ENCODE measurements at regions of chrX and their contacts with region 1.

Region 1: DNA sequence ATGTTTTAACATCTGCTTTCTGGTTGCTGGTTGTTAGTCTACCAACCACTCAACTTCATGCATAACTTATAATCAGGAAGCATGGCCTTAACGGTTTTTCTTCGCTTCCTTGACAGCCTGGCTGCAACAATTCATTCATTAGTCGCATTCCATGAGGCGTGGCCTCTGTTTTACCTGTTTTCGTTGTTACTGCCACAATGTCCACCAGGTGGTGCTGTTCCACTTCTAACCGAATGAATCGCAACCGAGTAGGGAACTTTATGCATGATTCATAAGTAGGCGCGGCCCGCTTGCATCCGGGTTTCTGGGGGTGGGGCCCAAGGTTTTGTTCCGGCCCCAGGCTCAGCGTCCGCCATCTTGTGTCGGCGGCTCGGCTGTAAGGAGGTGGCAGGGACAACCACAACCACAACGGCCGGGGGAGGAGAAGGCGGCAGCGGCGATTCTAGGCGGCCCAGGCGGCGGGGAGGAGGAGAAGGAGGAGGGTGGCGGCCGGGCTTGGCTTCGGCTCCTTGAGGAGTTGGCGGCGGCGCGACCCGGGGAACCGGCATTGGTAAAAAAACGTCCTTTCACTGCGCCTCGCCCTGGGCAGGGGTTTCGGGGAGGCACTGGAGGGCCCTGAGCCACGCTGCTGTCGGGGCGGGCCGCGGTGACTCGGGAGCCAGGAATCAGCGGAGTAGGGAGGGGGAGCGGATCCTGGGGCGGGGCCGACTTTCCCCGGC is at the start of gene UBA1:
- DNase-seq: peak; percentile 98
- ATAC-seq: peak; percentile 48
- H3K4me3 ChIP-seq: peak within 1 kb of the TSS; percentile 85
- H3K27ac ChIP-seq: peak within 1 kb of the TSS; percentile 90
- H3K4me1 ChIP-seq: peaks cover 40% of the 10 kb centered on the region
- H3K27me3 ChIP-seq: no peaks in the 10 kb centered on the region
- CTCF ChIP-seq: peak; percentile 80
- total RNA-seq, gene UBA1: 282 and 299 TPM in 2 replicates

Region 2: DNA sequence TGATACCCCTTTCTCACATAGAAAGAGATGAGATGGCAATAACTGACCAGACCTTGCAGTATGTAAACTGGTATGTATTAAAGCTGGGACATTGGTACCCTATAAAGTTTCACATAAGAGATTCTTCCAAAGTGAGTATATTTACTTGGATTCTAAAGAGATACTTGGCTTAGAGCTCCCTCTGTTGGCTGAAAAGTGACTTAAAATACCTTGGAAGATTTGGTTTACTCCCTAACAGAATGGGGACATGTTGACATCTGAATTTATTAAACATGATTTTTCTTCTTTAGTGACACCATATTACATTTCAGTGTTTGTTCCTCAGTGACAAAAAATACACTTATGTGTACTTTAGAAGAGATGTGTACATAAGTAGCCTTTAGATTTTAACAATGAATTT is 163.3 kb before region 1 on chrX:
- CTCF ChIA-PET with region 1: no interaction called
- POLR2A ChIA-PET with region 1: no interaction called
- intact Hi-C with region 1: no loop called
- DNase-seq: peak; percentile 89
- ATAC-seq: peak; percentile 64
- H3K4me3 ChIP-seq: no peak overlapping the region
- H3K27ac ChIP-seq: no peak overlapping the region
- H3K4me1 ChIP-seq: no peaks in the 10 kb centered on the region
- H3K27me3 ChIP-seq: no peaks in the 10 kb centered on the region
- CTCF ChIP-seq: peak; percentile 74

Region 3: DNA sequence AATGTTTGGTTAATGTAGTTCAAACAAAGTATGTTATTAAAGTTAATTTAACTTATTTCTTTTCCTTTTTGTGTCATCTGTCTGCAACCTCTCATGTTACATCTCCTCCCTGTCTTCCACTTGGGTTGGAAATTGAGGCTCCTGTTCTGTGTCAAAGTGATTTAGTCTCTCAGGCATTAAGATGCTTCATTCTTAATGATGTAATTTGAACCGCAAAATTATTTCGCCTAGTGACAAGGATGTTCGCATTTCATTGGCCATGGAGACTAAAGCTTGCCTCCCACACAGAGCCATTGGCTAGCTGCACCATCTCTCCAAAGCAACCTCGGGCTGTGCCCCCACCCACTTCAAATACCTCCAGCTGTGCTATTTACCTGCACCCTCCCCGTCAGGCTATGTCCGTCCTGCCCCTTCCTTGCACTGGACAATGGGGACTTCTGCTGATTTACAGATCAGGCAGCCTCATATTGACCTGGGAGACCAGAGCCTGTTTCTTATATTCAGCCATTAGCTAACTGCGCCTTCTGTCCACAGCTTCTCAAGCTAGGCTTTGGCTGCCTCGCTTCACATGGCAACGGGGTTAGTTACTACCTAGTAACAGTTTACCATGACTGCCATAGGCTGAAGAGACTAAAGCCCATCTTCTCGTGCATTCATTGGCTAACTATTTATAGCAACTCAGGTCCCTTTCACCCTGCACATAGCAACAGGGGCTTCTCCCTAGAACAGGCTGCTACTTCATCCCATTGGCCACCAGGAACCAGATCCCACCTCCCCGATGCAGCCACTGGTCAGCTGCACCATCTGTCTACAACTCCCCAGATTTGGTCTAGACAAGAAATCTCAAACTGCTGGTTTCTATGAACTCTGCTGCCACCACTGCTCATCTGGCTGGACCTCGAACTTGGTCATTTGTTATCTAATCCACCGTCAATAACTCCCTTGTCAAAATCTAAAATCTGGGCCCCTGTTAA is 168.2 kb after region 1 on chrX:
- CTCF ChIA-PET with region 1: no interaction called
- POLR2A ChIA-PET with region 1: no interaction called
- intact Hi-C with region 1: loop called (anchors 5 kb)
- DNase-seq: peak; percentile 67
- ATAC-seq: peak; percentile 93
- H3K4me3 ChIP-seq: peak overlapping the region; percentile 39; the same call in 1 of the 2 replicates
- H3K27ac ChIP-seq: 0 out of 2 replicates have a peak overlapping the region, but pooled peaks have one; percentile 12
- H3K4me1 ChIP-seq: no peaks in the 10 kb centered on the region
- H3K27me3 ChIP-seq: no peaks in the 10 kb centered on the region
- CTCF ChIP-seq: no peak; the same call in 1 of the 2 replicates

Region 4: GRCh38 chrX:47482512-47483309 is 289.1 kb after region 1 on chrX and contains the start of gene ZNF41:
- CTCF ChIA-PET with region 1: no interaction called
- POLR2A ChIA-PET with region 1: no interaction called
- intact Hi-C with region 1: loop called (anchors 5 kb)
- DNase-seq: peak; percentile 90
- ATAC-seq: peak; percentile 92
- H3K4me3 ChIP-seq: peak within 1 kb of the TSS; percentile 92
- H3K27ac ChIP-seq: peak within 1 kb of the TSS; percentile 86
- H3K4me1 ChIP-seq: peaks cover 25% of the 10 kb centered on the region
- H3K27me3 ChIP-seq: no peaks in the 10 kb centered on the region
- CTCF ChIP-seq: no peak
- total RNA-seq, gene ZNF41: 11.1 and 11.3 TPM in 2 replicates

Region 5: DNA sequence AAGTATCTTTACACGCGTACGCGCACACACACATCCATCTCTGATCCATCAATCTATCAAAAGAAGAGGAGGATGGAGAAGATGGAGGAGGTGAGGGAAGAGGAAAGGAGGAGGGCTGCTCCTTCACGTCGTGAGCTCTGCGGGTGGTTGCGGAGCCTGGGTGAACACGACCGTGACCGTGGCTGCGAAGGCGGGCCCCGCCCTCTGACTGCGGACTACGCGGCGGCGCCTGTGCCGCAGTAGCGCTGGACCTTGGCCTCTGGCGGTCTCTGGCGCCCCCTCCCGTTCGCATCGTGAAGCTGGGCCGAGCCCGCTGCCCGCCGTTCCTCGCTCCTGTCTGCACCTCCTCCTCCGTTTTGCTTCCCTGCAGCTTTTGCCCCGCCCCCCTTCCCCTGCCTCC is 329.7 kb after region 1 on chrX:
- CTCF ChIA-PET with region 1: no interaction called
- POLR2A ChIA-PET with region 1: no interaction called
- intact Hi-C with region 1: loop called (anchors 1 kb)
- DNase-seq: peak; percentile 81
- ATAC-seq: peak; percentile 97
- H3K4me3 ChIP-seq: peak overlapping the region; percentile 72
- H3K27ac ChIP-seq: no peak overlapping the region
- H3K4me1 ChIP-seq: peaks cover 3% of the 10 kb centered on the region; the same call in 1 of the 2 replicates
- H3K27me3 ChIP-seq: no peaks in the 10 kb centered on the region
- CTCF ChIP-seq: peak; percentile 70